ENCODE measurements at regions of chr13 and their contacts with region 1.

Region 1: DNA sequence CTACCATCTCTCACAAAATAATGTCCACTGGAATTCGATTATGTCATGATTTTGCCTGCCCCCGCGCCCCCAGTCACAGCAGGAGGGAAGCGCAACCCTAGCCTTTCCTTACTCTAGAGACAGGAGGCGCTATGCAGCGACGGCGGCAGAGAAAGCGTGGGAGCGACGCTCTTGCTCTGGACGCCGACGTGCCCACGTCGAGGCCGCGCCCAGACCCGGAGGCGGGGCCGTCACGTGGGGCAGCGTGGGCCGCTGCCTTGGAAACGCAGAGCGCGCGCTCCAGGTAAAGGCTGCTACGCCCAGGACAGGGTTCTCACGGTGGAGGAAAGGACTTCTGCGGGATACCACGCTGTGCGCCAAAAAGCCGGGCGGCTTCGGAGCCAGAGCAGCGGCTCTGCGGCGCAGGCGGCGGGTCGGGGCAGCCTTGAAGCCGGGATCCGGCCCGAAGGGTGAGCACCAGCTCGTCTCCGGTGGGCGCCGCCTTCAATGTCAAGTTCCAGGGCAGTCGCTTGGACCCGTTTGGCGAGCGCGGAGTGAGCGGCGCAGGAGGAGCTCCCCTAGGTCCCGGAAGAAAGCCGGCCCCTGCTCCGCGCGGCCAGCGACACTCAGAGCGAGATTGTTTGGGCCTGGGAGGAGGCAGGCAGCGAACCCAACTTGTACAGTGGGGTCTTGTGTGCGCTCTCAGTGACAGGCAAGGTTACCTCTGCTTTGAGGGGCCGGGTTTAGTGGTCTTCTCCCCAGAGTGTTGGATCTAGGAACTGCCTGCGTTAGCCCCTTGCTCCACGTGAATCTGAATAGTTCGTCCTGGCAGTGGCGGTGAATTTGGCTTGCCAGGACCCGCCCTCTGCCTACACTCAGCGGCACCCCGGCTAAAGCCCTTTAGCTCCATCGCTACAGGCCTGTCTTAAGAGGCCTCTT is 121.7 kb downstream of the MRPL57 start:
- DNase-seq: peak; percentile 79 to 91 (median 85)
- ATAC-seq: peak; percentile 100
- H3K4me3 ChIP-seq: peak overlapping the region; percentile 90
- H3K4me3 Mint-ChIP-seq: peak overlapping the region; percentile 78 to 95 (median 86)
- H3K27ac ChIP-seq: peak overlapping the region; percentile 44
- H3K27ac Mint-ChIP-seq: peak overlapping the region; percentile 58 to 90 (median 72)
- H3K4me1 ChIP-seq: peaks cover 11 to 15% of the 10 kb centered on the region in 2 donors
- H3K4me1 Mint-ChIP-seq: peaks cover 11 to 25% (median 22%) of the 10 kb centered on the region in 7 donors
- H3K27me3 ChIP-seq: no peaks in the 10 kb centered on the region
- H3K27me3 Mint-ChIP-seq: no peaks in the 10 kb centered on the region

Region 2: GRCh38 chr13:19633479-19634255 is 1664.5 kb before region 1 on chr13 and contains the start of gene MPHOSPH8:
- CTCF ChIA-PET with region 1: no interaction called
- POLR2A ChIA-PET with region 1: no interaction called
- intact Hi-C with region 1: loop called in 1 of 2 experiments (anchors 5 kb)
- DNase-seq: peak; percentile 82 to 94 (median 92)
- ATAC-seq: peak; percentile 99
- H3K4me3 ChIP-seq: peak within 1 kb of the TSS; percentile 83
- H3K4me3 Mint-ChIP-seq: peak within 1 kb of the TSS; percentile 96 to 100 (median 100)
- H3K27ac ChIP-seq: peak within 1 kb of the TSS; percentile 91
- H3K27ac Mint-ChIP-seq: peak within 1 kb of the TSS; percentile 98 to 100 (median 99)
- H3K4me1 ChIP-seq: peaks cover 20 to 28% of the 10 kb centered on the region in 2 donors
- H3K4me1 Mint-ChIP-seq: peaks cover 29 to 42% (median 34%) of the 10 kb centered on the region in 7 donors
- H3K27me3 ChIP-seq: no peaks in the 10 kb centered on the region
- H3K27me3 Mint-ChIP-seq: peaks cover 0 to 3% (median 0%) of the 10 kb centered on the region in 5 donors
- total RNA-seq, gene MPHOSPH8: 50.6 to 131 (median 65.6) TPM

Region 3: GRCh38 chr13:20566898-20567874 is 731.0 kb before region 1 on chr13 and contains the start of gene IFT88:
- CTCF ChIA-PET with region 1: no interaction called
- POLR2A ChIA-PET with region 1: no interaction called
- intact Hi-C with region 1: loop called in 1 of 2 experiments (anchors 2 kb)
- DNase-seq: peak; percentile 72 to 87 (median 80)
- ATAC-seq: peak; percentile 94
- H3K4me3 ChIP-seq: peak within 1 kb of the TSS; percentile 52
- H3K4me3 Mint-ChIP-seq: peak within 1 kb of the TSS; percentile 88 to 97 (median 93)
- H3K27ac ChIP-seq: peak within 1 kb of the TSS; percentile 73
- H3K27ac Mint-ChIP-seq: peak within 1 kb of the TSS; percentile 92 to 94 (median 93)
- H3K4me1 ChIP-seq: peaks cover 0 to 8% of the 10 kb centered on the region in 2 donors
- H3K4me1 Mint-ChIP-seq: peaks cover 7 to 18% (median 17%) of the 10 kb centered on the region in 7 donors
- H3K27me3 ChIP-seq: no peaks in the 10 kb centered on the region
- H3K27me3 Mint-ChIP-seq: no peaks in the 10 kb centered on the region
- total RNA-seq, gene IFT88: 5.0 to 17.0 (median 11.7) TPM

Region 4: DNA sequence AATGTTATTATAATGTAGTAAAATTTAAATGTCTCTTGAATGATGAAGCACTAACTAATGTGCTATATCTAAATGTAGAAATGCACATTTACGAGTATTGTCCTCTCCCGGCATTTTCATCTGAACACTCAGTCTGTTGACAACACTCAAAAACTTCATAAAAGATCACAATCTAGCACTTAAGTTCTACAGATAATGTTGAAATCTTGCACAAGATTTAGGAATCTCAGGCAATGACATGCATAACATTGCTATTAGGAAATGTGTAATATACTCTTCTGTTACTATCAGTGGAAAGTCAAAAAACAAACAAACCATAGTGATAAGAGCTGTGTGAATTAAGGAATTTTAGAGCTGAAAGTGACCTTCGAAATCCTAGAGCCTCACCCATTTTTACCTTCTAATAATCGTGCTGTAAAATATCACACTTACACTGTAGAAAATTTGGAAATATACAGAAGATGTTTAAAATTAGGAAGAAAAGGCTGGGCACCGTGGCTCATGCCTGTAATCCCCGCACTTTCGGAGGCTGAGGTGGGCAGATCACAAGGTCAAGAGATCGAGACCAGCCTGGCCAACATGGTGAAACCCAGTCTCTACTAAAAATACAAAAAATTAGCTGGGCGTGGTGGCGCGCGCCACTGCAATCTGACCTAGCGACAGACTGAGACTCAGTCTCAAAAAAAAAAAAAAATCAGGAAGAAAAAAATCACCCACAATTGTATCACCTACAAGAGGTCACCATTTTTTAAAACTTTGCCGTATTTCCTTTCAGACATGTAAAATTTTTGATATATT is 357.9 kb before region 1 on chr13:
- CTCF ChIA-PET with region 1: no interaction called
- POLR2A ChIA-PET with region 1: no interaction called
- intact Hi-C with region 1: loop called (anchors 1 to 5 kb)
- DNase-seq: no peak
- ATAC-seq: no peak
- H3K4me3 ChIP-seq: no peak overlapping the region
- H3K4me3 Mint-ChIP-seq: no peak overlapping the region
- H3K27ac ChIP-seq: no peak overlapping the region
- H3K27ac Mint-ChIP-seq: no peak overlapping the region
- H3K4me1 ChIP-seq: no peaks in the 10 kb centered on the region
- H3K4me1 Mint-ChIP-seq: peaks cover 0 to 7% (median 3%) of the 10 kb centered on the region in 7 donors
- H3K27me3 ChIP-seq: no peaks in the 10 kb centered on the region
- H3K27me3 Mint-ChIP-seq: peaks cover 16 to 43% (median 22%) of the 10 kb centered on the region in 5 donors

Region 5: DNA sequence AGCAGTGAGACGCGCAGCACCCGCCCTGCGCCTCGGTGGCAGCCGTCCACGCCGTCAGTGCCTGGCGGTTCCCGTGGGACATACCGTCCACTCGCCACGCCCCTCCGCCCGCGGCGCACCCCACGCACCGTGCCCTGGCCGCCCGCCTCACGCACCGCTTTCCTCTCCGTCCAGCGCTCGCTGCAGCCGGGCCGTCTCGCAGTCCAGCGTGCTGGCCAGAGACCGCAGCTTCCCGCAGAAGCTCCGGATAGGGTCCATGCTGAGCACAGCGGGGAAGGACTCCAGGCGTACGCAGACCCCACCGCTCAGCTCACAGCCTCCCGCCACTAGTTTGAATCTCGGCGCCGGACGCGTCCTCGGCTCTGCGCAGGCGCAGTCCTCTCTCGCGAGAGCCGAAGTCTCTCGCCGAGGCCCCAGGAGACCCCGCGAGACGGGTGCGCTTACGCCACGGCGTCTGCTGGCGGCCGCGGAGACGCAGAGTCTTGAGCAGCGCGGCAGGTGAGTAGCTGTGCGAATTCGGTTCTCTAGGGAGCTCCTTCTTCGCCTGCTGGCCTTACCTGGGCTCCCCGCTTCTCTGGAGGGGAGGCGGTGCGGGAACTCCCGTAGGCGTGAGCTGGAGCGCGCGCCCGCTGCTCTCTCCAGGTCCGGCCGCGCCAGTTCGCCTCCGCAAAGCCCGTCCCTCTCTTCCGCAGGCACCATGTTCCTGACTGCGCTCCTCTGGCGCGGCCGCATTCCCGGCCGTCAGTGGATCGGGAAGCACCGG is 121.8 kb before region 1 on chr13 and contains the starts of genes MRPL57 and SKA3:
- CTCF ChIA-PET with region 1: interaction called, 4 read pairs
- POLR2A ChIA-PET with region 1: interaction called, 9 read pairs
- intact Hi-C with region 1: loop called (anchors 1 kb)
- DNase-seq: peak; percentile 90 to 97 (median 94)
- ATAC-seq: peak; percentile 97
- H3K4me3 ChIP-seq: peak within 1 kb of the TSS; percentile 86
- H3K4me3 Mint-ChIP-seq: peak within 1 kb of the TSS; percentile 95 to 99 (median 97)
- H3K27ac ChIP-seq: peak within 1 kb of the TSS; percentile 95
- H3K27ac Mint-ChIP-seq: peak within 1 kb of the TSS; percentile 80 to 97 (median 95)
- H3K4me1 ChIP-seq: peaks cover 10 to 16% of the 10 kb centered on the region in 2 donors
- H3K4me1 Mint-ChIP-seq: peaks cover 13 to 31% (median 22%) of the 10 kb centered on the region in 7 donors
- H3K27me3 ChIP-seq: no peaks in the 10 kb centered on the region
- H3K27me3 Mint-ChIP-seq: no peaks in the 10 kb centered on the region
- total RNA-seq, gene MRPL57: 10.6 to 22.8 (median 19.8) TPM
- total RNA-seq, gene SKA3: 0.46 to 35.0 (median 1.6) TPM in 4 of 5 experiments, not detected in the other

Region 6: GRCh38 chr13:21402586-21403228 is 104.5 kb after region 1 on chr13:
- CTCF ChIA-PET with region 1: no interaction called
- POLR2A ChIA-PET with region 1: no interaction called
- intact Hi-C with region 1: loop called (anchors 2 to 5 kb)
- DNase-seq: no peak
- ATAC-seq: no peak
- H3K4me3 ChIP-seq: no peak overlapping the region
- H3K4me3 Mint-ChIP-seq: no peak overlapping the region
- H3K27ac ChIP-seq: no peak overlapping the region
- H3K27ac Mint-ChIP-seq: peak overlapping the region in 8 of 9 donors; percentile 1 to 78 (median 56)
- H3K4me1 ChIP-seq: peaks cover 6 to 13% of the 10 kb centered on the region in 2 donors
- H3K4me1 Mint-ChIP-seq: peaks cover 19 to 56% (median 47%) of the 10 kb centered on the region in 7 donors
- H3K27me3 ChIP-seq: no peaks in the 10 kb centered on the region
- H3K27me3 Mint-ChIP-seq: no peaks in the 10 kb centered on the region

Region 7: DNA sequence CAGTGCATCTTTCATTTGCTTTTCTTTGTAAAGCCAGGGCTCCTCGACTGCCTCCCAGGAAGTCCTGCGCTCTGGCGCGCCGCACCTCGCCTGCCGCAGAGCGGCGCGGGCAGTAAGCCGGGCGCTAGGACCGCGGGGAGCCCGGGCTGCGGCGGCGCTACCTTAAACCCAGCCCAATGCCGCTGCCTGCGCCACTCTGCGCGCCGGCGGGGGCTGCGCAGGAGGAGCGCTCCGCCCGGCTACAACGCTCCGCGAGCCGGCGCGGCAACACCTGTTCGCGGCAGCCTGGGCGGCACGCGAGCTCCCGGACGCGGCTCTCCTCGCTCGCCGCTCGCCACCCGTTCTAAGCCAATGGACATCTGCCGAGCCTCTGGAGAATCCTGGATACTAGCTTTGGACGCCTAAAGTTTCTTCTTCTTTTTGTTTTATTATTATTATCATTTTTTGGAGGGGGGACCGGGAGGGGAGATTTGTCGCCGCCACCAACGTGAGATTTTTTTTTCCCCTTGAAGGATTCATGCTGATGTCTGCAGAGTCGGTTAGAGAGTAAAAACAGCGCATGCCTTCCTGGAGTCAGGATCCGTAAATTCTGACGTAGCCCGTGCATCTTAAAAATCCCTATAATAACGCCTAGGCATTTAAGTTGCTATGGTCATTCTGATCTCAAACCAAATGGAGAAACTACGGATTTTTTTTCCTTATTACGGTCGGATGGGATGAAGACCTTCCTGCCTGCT is 372.9 kb after region 1 on chr13 and contains the start of gene FGF9:
- CTCF ChIA-PET with region 1: no interaction called
- POLR2A ChIA-PET with region 1: no interaction called
- intact Hi-C with region 1: loop called in 1 of 2 experiments (anchors 1 kb)
- DNase-seq: peak; percentile 76 to 88 (median 86)
- ATAC-seq: peak; percentile 89
- H3K4me3 ChIP-seq: peak within 1 kb of the TSS; percentile 92
- H3K4me3 Mint-ChIP-seq: peak within 1 kb of the TSS; percentile 88 to 98 (median 93)
- H3K27ac ChIP-seq: peak within 1 kb of the TSS; percentile 48
- H3K27ac Mint-ChIP-seq: peak within 1 kb of the TSS; percentile 61 to 94 (median 78)
- H3K4me1 ChIP-seq: peaks cover 19 to 32% of the 10 kb centered on the region in 2 donors
- H3K4me1 Mint-ChIP-seq: peaks cover 27 to 45% (median 44%) of the 10 kb centered on the region in 7 donors
- H3K27me3 ChIP-seq: peaks cover 0 to 4% of the 10 kb centered on the region in 2 donors
- H3K27me3 Mint-ChIP-seq: peaks cover 5 to 77% (median 20%) of the 10 kb centered on the region in 5 donors
- total RNA-seq, gene FGF9: 0.19 to 5.6 (median 2.0) TPM

Measured in naive thymus-derived CD4-positive, alpha-beta T cell (primary cell).